Panc1 (cell line): ENCODE measurements at regions of chr20 and their contacts with region 1.

Region 1: DNA sequence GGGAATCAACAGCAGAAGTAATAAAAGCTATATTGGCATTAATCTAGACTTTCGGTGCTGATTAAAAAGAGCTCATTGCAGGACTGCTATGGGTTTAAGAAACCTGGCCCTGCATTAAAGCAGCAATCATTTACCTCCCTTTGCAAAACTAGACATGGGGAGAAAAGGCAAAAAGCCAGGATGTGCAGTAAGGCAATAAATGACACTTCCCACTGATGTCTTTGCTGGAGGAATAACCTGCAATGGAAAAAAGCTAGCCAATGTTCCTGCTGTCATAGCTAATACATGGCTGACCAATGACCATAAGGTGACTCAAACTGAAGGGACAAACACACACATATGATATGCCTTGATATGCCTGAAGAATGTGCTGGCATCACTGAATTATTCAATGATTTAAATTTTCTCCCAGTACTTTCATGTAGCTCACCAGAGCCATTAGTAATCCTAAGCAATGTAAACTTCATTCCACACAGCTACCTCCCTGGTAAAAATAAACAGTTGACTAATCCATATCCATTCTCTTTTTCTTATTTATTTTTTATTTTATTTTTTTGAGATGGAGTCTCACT is 8.7 kb downstream of the DNAAF9 start:
- DNase-seq: no peak
- ATAC-seq: no peak
- H3K4me3 ChIP-seq: no peak overlapping the region
- H3K27ac ChIP-seq: no peak overlapping the region
- H3K4me1 ChIP-seq: no peaks in the 10 kb centered on the region
- H3K27me3 ChIP-seq: no peaks in the 10 kb centered on the region
- CTCF ChIP-seq: no peak

Region 2: DNA sequence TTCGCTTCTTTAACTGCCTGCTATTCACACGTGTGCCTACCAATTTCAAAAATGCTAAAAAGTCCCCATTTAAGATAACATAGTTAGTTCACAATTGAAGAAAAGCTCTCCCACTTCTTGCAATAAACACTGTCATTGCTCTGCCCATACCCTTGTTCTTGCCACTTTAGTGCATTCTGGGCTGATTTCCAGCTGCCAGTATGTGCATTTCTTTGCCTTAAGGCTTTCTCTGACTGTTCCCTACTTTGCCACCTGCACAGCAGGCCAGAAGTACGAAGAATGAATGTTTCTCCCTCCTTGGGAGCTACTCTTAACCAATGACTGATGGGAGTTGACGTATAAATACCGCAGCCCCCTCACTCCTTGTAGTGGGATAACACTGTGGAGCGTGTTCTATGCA is 56.1 kb after region 1 on chr20:
- CTCF ChIA-PET with region 1: no interaction called
- POLR2A ChIA-PET with region 1: interaction called, 15 read pairs
- in situ Hi-C with region 1: no loop called
- intact Hi-C with region 1: no loop called
- DNase-seq: no peak
- ATAC-seq: no peak
- H3K4me3 ChIP-seq: no peak overlapping the region
- H3K27ac ChIP-seq: no peak overlapping the region
- H3K4me1 ChIP-seq: no peaks in the 10 kb centered on the region
- H3K27me3 ChIP-seq: no peaks in the 10 kb centered on the region; the same call in 1 of the 2 replicates
- CTCF ChIP-seq: no peak